Aorta (tissue), 5 donors: ENCODE measurements at regions of chr20 and their contacts with region 1.

Region 1: DNA sequence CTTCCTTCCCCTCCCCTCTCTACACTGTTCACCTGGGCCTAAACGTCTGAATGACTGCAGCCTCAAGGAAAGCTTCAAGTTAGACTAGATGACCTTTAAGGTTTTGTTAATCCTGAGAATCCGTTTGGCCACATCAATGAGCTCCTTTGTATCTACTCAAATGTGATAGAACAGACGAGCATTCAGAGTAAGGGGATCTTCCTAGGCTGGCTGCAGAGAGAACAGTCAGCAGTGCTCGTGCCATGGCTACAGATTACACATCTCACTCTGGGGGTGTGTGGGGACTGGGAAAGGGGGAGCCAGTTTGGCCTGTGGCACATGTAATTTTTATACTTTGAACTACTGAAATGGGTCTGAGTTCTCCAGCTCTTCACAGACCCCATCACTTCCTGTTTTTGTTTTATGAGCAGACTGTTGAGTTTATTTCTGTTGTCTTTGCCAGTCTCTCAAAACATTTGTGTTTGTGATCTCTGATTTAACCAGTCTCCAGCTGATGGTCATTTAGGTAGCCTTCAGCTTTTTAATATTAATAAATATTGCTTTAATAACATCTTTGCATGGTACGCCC is 50.9 kb downstream of the KCNS1 start:
- DNase-seq: no peak
- ATAC-seq: no peak
- H3K4me3 ChIP-seq: no peak overlapping the region
- H3K27ac ChIP-seq: no peak overlapping the region
- H3K4me1 ChIP-seq: peaks cover 0 to 2% of the 10 kb centered on the region in 2 donors
- H3K27me3 ChIP-seq: no peaks in the 10 kb centered on the region

Region 2: GRCh38 chr20:44790638-44791393 is 259.2 kb before region 1 on chr20:
- intact Hi-C with region 1: no loop called
- DNase-seq: no peak
- ATAC-seq: no peak
- H3K4me3 ChIP-seq: no peak overlapping the region
- H3K27ac ChIP-seq: no peak overlapping the region
- H3K4me1 ChIP-seq: no peaks in the 10 kb centered on the region
- H3K27me3 ChIP-seq: no peaks in the 10 kb centered on the region

Region 3: DNA sequence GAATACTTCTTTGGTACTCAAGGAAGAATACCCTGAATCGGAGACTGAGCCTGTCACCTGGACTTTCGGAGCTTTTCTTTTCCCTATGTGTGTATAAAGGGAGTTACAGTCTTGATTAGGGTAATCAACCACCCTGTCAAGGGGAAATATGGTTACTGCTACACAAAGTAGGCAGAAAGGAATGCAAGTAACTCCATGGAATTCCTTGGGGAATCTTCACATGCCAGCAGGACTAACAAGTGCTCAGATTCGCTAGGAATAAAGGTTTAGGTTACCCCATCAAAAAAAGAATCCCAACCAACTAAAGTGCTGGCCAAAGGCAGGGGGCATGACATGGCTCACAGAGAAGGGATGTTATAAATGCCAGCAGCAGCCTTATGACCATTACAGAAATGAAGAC is 40.5 kb after region 1 on chr20:
- intact Hi-C with region 1: loop called (anchors 5 to 10 kb)
- DNase-seq: no peak
- ATAC-seq: no peak
- H3K4me3 ChIP-seq: no peak overlapping the region
- H3K27ac ChIP-seq: no peak overlapping the region
- H3K4me1 ChIP-seq: no peaks in the 10 kb centered on the region
- H3K27me3 ChIP-seq: no peaks in the 10 kb centered on the region